Activated naive CD4-positive, alpha-beta T cell treated with anti-CD3 and anti-CD28 coated beads for 36 hours (primary cell): ENCODE measurements at regions of chr10 and their contacts with region 1.

Region 1: DNA sequence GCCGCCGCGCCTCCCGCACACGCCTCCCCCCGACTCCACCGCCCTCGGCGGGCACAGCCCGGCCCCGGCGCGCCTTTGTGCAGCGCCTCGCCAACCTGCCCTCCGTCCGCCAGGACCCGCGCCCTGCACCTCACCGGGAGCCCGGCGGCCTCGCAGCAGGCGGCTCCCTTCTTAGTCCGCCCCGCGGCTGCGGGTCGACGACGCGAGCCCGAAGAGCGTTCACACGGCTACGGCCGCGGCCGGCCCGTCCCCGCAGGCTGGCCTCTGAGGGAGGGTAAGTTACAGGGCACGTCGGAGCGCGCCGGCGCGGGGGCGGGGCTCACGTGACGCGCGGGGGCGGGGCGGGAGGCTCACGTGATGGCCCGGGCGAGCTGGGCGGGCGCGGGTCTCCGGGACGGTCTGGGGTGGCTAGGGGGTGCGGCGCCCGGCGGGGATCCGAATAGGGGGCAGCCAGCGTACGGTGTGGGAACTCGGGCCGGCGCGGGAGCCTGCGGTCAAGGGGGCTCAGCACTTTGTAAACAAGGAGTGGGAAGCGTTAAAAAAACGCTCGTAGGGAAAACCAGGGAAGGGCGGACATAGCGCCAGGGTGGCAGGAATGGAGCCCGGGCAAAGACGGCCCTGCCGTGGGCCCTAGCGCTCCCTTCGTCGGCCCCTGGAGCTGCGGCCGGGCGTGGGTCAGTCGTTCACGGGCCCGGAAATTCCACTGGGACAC is at the start of gene ARHGAP12:
- DNase-seq: peak; percentile 78
- H3K4me3 Mint-ChIP-seq: peak within 1 kb of the TSS; percentile 88
- H3K27ac Mint-ChIP-seq: peak within 1 kb of the TSS; percentile 30
- H3K4me1 Mint-ChIP-seq: peaks cover 37% of the 10 kb centered on the region
- H3K27me3 Mint-ChIP-seq: no peaks in the 10 kb centered on the region
- total RNA-seq, gene ARHGAP12: 2.3 to 2.6 TPM

Region 2: GRCh38 chr10:30433730-30434272 is 1494.9 kb before region 1 on chr10 and contains the start of gene MAP3K8:
- CTCF ChIA-PET with region 1: no interaction called
- intact Hi-C with region 1: loop called (anchors 10 kb)
- DNase-seq: peak; percentile 87
- H3K4me3 Mint-ChIP-seq: peak within 1 kb of the TSS; percentile 84
- H3K27ac Mint-ChIP-seq: peak within 1 kb of the TSS; percentile 67
- H3K4me1 Mint-ChIP-seq: peaks cover 41% of the 10 kb centered on the region
- H3K27me3 Mint-ChIP-seq: no peaks in the 10 kb centered on the region
- total RNA-seq, gene MAP3K8: 13.6 to 14.5 TPM

Region 3: GRCh38 chr10:31745612-31746376 is 182.9 kb before region 1 on chr10:
- CTCF ChIA-PET with region 1: no interaction called
- intact Hi-C with region 1: loop called (anchors 5 kb)
- DNase-seq: peak; percentile 84
- H3K4me3 Mint-ChIP-seq: no peak overlapping the region
- H3K27ac Mint-ChIP-seq: peak overlapping the region; percentile 95
- H3K4me1 Mint-ChIP-seq: peaks cover 47% of the 10 kb centered on the region
- H3K27me3 Mint-ChIP-seq: no peaks in the 10 kb centered on the region

Region 4: GRCh38 chr10:31864834-31865518 is 63.7 kb before region 1 on chr10:
- CTCF ChIA-PET with region 1: interaction called, 5 read pairs
- intact Hi-C with region 1: loop called (anchors 2 kb)
- DNase-seq: no peak
- H3K4me3 Mint-ChIP-seq: no peak overlapping the region
- H3K27ac Mint-ChIP-seq: no peak overlapping the region
- H3K4me1 Mint-ChIP-seq: peaks cover 21% of the 10 kb centered on the region
- H3K27me3 Mint-ChIP-seq: no peaks in the 10 kb centered on the region

Region 5: DNA sequence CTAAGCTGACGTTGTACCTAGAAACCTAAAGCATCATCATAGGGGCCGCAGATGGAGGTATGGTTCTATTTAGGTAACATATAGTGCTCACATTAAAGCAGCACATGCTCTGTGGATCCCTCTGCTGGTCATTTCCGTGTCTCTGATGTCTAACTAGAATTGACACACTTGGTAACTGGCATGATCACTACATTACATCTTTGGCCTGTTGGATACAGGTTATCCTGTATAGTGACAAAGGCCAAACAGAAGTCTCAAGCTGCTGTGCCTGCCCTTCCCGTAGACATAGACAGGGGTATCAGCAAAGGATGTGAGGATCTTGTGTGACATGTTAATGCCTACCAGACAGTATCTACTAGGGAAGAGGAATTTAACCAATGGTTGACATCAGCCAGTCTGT is 76.3 kb after region 1 on chr10:
- CTCF ChIA-PET with region 1: interaction called, 6 read pairs
- intact Hi-C with region 1: loop called (anchors 2 kb)
- DNase-seq: peak; percentile 64
- H3K4me3 Mint-ChIP-seq: no peak overlapping the region
- H3K27ac Mint-ChIP-seq: peak overlapping the region; percentile 46
- H3K4me1 Mint-ChIP-seq: peaks cover 2% of the 10 kb centered on the region
- H3K27me3 Mint-ChIP-seq: no peaks in the 10 kb centered on the region

Region 6: DNA sequence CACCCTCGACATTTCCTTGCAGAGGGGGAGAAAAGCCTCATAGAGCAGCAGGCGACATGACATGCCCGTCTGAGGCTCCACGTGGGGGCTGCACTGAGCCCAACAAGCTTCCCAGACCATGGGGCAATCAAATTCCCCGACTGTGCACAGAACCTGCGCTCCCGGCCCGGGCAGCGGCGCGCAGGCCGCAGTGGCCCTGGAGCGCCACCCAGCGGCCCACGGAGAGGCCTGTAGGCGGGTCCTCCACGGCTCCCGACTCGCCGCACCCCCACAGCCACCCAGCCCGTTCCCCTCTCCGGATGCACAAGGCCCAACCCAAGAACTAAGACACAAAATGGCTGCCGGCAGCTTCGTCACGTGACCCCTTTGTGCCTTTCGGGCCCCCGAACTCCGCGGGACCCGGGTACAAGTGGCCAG is 417.4 kb after region 1 on chr10:
- CTCF ChIA-PET with region 1: no interaction called
- intact Hi-C with region 1: loop called (anchors 10 kb)
- DNase-seq: peak; percentile 97
- H3K4me3 Mint-ChIP-seq: peak overlapping the region; percentile 89
- H3K27ac Mint-ChIP-seq: peak overlapping the region; percentile 99
- H3K4me1 Mint-ChIP-seq: peaks cover 65% of the 10 kb centered on the region
- H3K27me3 Mint-ChIP-seq: no peaks in the 10 kb centered on the region